ENCODE measurements at regions of chr4 and their contacts with region 1.

Region 1: DNA sequence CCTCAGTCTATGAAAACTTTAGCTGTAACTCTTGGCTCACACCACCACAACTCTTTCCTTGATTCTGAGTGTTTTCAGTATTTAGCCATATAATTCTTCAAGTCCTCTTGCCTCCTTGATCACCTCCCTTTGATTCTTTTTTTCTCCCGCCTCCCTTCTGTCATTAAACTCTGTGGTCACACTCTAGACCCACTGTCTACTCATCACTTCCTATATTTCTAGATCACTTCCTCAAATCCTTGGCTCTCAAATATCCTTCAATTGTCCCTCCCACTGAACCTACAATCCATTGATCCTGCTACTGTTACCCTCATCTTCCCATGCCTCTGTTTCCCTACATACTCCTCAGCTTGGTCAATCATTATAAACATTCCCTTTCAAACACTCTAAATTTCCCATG is 12.4 kb upstream of the CXXC4 start:
- DNase-seq: no peak
- ATAC-seq: no peak
- H3K4me3 ChIP-seq: no peak overlapping the region
- H3K27ac ChIP-seq: no peak overlapping the region
- H3K4me1 ChIP-seq: peaks cover 0 to 16% (median 0%) of the 10 kb centered on the region in 9 donors
- H3K27me3 ChIP-seq: no peaks in the 10 kb centered on the region
- CTCF ChIP-seq: no peak

Region 2: GRCh38 chr4:104559502-104559901 is 52.4 kb after region 1 on chr4:
- intact Hi-C with region 1: no loop called
- DNase-seq: no peak
- ATAC-seq: no peak
- H3K4me3 ChIP-seq: no peak overlapping the region
- H3K27ac ChIP-seq: no peak overlapping the region
- H3K4me1 ChIP-seq: no peaks in the 10 kb centered on the region
- H3K27me3 ChIP-seq: no peaks in the 10 kb centered on the region
- CTCF ChIP-seq: no peak

Region 3: DNA sequence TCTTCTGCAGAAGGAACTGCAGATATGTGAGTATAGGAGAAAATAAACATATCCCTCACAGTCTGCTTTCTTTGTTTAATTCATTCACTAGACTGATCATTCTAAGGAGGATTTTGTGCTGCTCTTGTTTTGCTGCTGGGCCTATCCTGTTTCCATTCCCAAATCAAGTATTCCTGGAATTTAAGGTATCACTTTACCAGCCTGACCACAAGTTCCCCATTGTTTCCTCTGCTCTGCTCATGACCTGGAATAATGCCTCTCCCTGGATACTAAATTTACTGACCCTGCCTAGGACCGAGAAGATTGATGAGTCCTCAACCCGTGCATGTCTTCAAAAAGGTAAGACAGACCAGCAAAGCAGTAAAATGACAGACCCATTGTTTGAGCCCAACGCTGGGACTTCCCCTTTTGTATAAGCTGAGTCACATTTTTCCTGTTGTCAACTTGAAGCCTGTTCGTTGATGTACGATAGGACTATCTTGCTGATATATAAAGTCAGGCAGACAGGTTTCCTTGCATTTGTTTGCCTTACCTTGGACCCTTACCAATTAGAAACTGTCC is 554.1 kb after region 1 on chr4:
- intact Hi-C with region 1: no loop called
- DNase-seq: peak in 1 of 2 donors; percentile 10
- ATAC-seq: peak in 6 of 8 donors; percentile 43 to 78 (median 61)
- H3K4me3 ChIP-seq: no peak overlapping the region
- H3K27ac ChIP-seq: peak overlapping the region in 4 of 10 donors; percentile 31 to 88 (median 38)
- H3K4me1 ChIP-seq: peaks cover 0 to 49% (median 7%) of the 10 kb centered on the region in 9 donors
- H3K27me3 ChIP-seq: no peaks in the 10 kb centered on the region
- CTCF ChIP-seq: no peak

Region 4: GRCh38 chr4:105603158-105603557 is 1096.0 kb after region 1 on chr4:
- intact Hi-C with region 1: loop called in 1 of 10 experiments (anchors 5 kb)
- DNase-seq: no peak
- ATAC-seq: no peak
- H3K4me3 ChIP-seq: no peak overlapping the region
- H3K27ac ChIP-seq: no peak overlapping the region
- H3K4me1 ChIP-seq: peaks cover 0 to 28% (median 4%) of the 10 kb centered on the region in 9 donors
- H3K27me3 ChIP-seq: no peaks in the 10 kb centered on the region
- CTCF ChIP-seq: no peak

Measured in heart right ventricle (tissue), 16 donors.